ENCODE measurements at regions of chr6 and their contacts with region 1.

Region 1: DNA sequence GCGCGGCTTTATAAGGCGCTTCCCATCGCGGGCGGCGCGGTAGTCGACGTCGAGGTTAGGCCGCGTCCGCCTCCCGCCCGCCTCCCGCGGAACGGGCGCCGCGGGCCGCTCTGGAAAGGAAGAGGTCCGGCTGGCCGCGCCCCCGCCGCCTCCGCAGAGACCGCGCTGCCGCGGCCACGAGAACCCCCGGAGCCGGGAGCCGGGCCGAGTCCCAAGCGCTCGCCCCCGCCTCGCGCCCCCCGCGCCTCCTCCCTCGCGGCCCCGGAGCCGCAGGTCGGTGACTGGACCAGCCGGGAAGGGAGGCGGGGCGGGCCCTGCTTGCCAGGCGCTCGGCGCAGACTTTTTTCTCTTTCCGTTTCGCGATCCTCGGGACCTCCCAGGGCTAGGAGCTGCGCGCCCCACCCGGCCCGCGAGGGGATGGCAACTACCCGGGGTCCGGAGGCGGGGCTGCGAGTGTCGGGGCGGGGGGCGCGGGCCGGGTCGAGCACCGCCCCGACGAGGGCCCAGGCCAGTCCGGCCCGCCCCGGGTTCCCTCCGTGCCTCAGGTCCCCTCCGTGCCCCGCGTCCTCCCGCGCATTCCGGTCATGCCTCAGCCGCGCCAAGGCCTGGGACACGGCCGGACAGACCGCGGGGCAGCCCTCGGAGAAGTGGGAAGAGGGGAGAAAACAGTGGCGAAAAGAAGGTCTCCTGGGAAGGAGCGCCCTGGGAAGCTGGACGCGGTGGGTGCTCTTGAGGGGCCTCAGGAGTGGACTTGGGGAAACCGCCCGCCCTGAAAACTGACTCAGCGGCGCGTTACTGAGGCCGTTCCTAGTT is 423 bp upstream of the PXDC1 start:
- DNase-seq: peak; percentile 59 to 96
- H3K4me3 ChIP-seq: peak overlapping the region; percentile 81 to 82
- H3K27ac ChIP-seq: peak overlapping the region; percentile 100
- H3K4me1 ChIP-seq: peaks cover 0 to 3% of the 10 kb centered on the region in 2 donors
- H3K27me3 ChIP-seq: no peaks in the 10 kb centered on the region
- CTCF ChIP-seq: peak; percentile 33 to 50 (median 47)

Region 2: GRCh38 chr6:3798055-3798919 is 46.4 kb after region 1 on chr6:
- intact Hi-C with region 1: loop called (anchors 1 kb)
- DNase-seq: no peak
- H3K4me3 ChIP-seq: no peak overlapping the region
- H3K27ac ChIP-seq: peak overlapping the region; percentile 19 to 61
- H3K4me1 ChIP-seq: peaks cover 11 to 29% of the 10 kb centered on the region in 2 donors
- H3K27me3 ChIP-seq: no peaks in the 10 kb centered on the region
- CTCF ChIP-seq: no peak

Region 3: GRCh38 chr6:3841711-3842565 is 90.0 kb after region 1 on chr6:
- intact Hi-C with region 1: loop called (anchors 2 kb)
- DNase-seq: peak in 1 of 2 donors; percentile 79
- H3K4me3 ChIP-seq: no peak overlapping the region
- H3K27ac ChIP-seq: peak overlapping the region; percentile 85 to 91
- H3K4me1 ChIP-seq: peaks cover 7 to 40% of the 10 kb centered on the region in 2 donors
- H3K27me3 ChIP-seq: no peaks in the 10 kb centered on the region
- CTCF ChIP-seq: no peak

Measured in ascending aorta (tissue), 2 donors.